ENCODE measurements at regions of chr12 and their contacts with region 1.

Region 1: GRCh38 chr12:82685790-82686167 is 927 bp upstream of the TMTC2 start:
- DNase-seq: peak; percentile 85 to 90 (median 87)
- H3K4me3 ChIP-seq: peak overlapping the region; percentile 61 to 85
- H3K4me3 Mint-ChIP-seq: peak overlapping the region; percentile 93 to 100 (median 97)
- H3K27ac ChIP-seq: peak overlapping the region; percentile 75
- H3K27ac Mint-ChIP-seq: peak overlapping the region; percentile 95 to 99 (median 96)
- H3K4me1 ChIP-seq: peaks cover 12% of the 10 kb centered on the region
- H3K4me1 Mint-ChIP-seq: peaks cover 7 to 28% (median 17%) of the 10 kb centered on the region in 4 donors
- H3K27me3 ChIP-seq: no peaks in the 10 kb centered on the region
- H3K27me3 Mint-ChIP-seq: peaks cover 11 to 13% of the 10 kb centered on the region in 2 donors

Region 2: GRCh38 chr12:82358200-82359114 is 327.3 kb before region 1 on chr12 and contains the starts of genes CCDC59 and METTL25:
- CTCF ChIA-PET with region 1: interaction called, 24 read pairs
- POLR2A ChIA-PET with region 1: interaction called, 12 read pairs
- intact Hi-C with region 1: no loop called
- DNase-seq: peak; percentile 97 to 98 (median 98)
- H3K4me3 ChIP-seq: peak within 1 kb of the TSS; percentile 94 to 96
- H3K4me3 Mint-ChIP-seq: peak within 1 kb of the TSS; percentile 96 to 100 (median 98)
- H3K27ac ChIP-seq: peak within 1 kb of the TSS; percentile 96
- H3K27ac Mint-ChIP-seq: peak within 1 kb of the TSS; percentile 98 to 100 (median 99)
- H3K4me1 ChIP-seq: peaks cover 43% of the 10 kb centered on the region
- H3K4me1 Mint-ChIP-seq: peaks cover 37 to 71% (median 54%) of the 10 kb centered on the region in 4 donors
- H3K27me3 ChIP-seq: no peaks in the 10 kb centered on the region
- H3K27me3 Mint-ChIP-seq: peaks cover 2% of the 10 kb centered on the region in 2 donors
- total RNA-seq, gene CCDC59: 58.1 to 60.4 TPM
- total RNA-seq, gene METTL25: 25.7 to 26.3 TPM

Region 3: GRCh38 chr12:82708061-82708879 is 22.5 kb after region 1 on chr12:
- CTCF ChIA-PET with region 1: interaction called, 17 read pairs
- POLR2A ChIA-PET with region 1: no interaction called
- intact Hi-C with region 1: no loop called
- DNase-seq: no peak
- H3K4me3 ChIP-seq: no peak overlapping the region
- H3K4me3 Mint-ChIP-seq: no peak overlapping the region
- H3K27ac ChIP-seq: no peak overlapping the region
- H3K27ac Mint-ChIP-seq: no peak overlapping the region
- H3K4me1 ChIP-seq: no peaks in the 10 kb centered on the region
- H3K4me1 Mint-ChIP-seq: peaks cover 0 to 2% (median under 1%) of the 10 kb centered on the region in 4 donors
- H3K27me3 ChIP-seq: no peaks in the 10 kb centered on the region
- H3K27me3 Mint-ChIP-seq: no peaks in the 10 kb centered on the region

Region 4: DNA sequence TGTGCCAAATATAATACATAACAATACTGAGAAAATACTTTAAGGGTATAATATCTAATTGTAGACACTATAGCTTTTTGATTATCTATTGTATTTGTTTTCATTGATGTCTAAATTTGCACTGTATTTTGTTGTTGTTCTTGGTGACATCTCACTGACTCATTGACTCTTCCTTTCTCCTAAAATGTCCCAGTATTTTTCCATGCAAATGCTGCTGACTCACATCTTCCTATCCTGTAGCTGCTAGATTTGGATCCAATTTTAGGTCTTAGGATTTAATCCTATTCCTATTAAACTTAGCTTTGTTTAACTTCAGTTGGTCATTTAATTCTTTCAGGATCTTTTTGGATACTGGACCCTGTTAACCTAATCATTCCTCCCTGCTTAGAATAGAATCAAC is 149.4 kb after region 1 on chr12:
- CTCF ChIA-PET with region 1: no interaction called
- POLR2A ChIA-PET with region 1: no interaction called
- intact Hi-C with region 1: no loop called
- DNase-seq: no peak
- H3K4me3 ChIP-seq: no peak overlapping the region
- H3K4me3 Mint-ChIP-seq: no peak overlapping the region
- H3K27ac ChIP-seq: no peak overlapping the region
- H3K27ac Mint-ChIP-seq: no peak overlapping the region
- H3K4me1 ChIP-seq: no peaks in the 10 kb centered on the region
- H3K4me1 Mint-ChIP-seq: no peaks in the 10 kb centered on the region
- H3K27me3 ChIP-seq: no peaks in the 10 kb centered on the region
- H3K27me3 Mint-ChIP-seq: no peaks in the 10 kb centered on the region

Region 5: GRCh38 chr12:83954939-83955601 is 1269.3 kb after region 1 on chr12:
- CTCF ChIA-PET with region 1: no interaction called
- POLR2A ChIA-PET with region 1: no interaction called
- intact Hi-C with region 1: loop called (anchors 10 kb)
- DNase-seq: no peak
- H3K4me3 ChIP-seq: no peak overlapping the region
- H3K4me3 Mint-ChIP-seq: no peak overlapping the region
- H3K27ac ChIP-seq: no peak overlapping the region
- H3K27ac Mint-ChIP-seq: peak overlapping the region in 1 of 7 donors; percentile 31
- H3K4me1 ChIP-seq: no peaks in the 10 kb centered on the region
- H3K4me1 Mint-ChIP-seq: no peaks in the 10 kb centered on the region
- H3K27me3 ChIP-seq: no peaks in the 10 kb centered on the region
- H3K27me3 Mint-ChIP-seq: no peaks in the 10 kb centered on the region

Region 6: GRCh38 chr12:84507956-84508850 is 1822.4 kb after region 1 on chr12:
- CTCF ChIA-PET with region 1: interaction called, 16 read pairs
- POLR2A ChIA-PET with region 1: no interaction called
- intact Hi-C with region 1: loop called (anchors 1 kb)
- DNase-seq: no peak
- H3K4me3 ChIP-seq: no peak overlapping the region
- H3K4me3 Mint-ChIP-seq: no peak overlapping the region
- H3K27ac ChIP-seq: no peak overlapping the region
- H3K27ac Mint-ChIP-seq: no peak overlapping the region
- H3K4me1 ChIP-seq: no peaks in the 10 kb centered on the region
- H3K4me1 Mint-ChIP-seq: no peaks in the 10 kb centered on the region
- H3K27me3 ChIP-seq: no peaks in the 10 kb centered on the region
- H3K27me3 Mint-ChIP-seq: no peaks in the 10 kb centered on the region